ENCODE measurements at regions of chr5 and their contacts with region 1.

Region 1: GRCh38 chr5:90783460-90784333 is 225.1 kb downstream of the ADGRV1 start:
- DNase-seq: peak in 1 of 2 experiments; percentile 92
- H3K4me3 ChIP-seq: no peak overlapping the region
- H3K27ac ChIP-seq: no peak overlapping the region
- H3K4me1 ChIP-seq: no peaks in the 10 kb centered on the region
- H3K27me3 ChIP-seq: no peaks in the 10 kb centered on the region
- CTCF ChIP-seq: peak; percentile 44 to 82 (median 79)
- EP300 ChIP-seq: no peak
- POLR2A ChIP-seq: no peak
- RAD21 ChIP-seq: peak; percentile 79 to 84

Region 2: DNA sequence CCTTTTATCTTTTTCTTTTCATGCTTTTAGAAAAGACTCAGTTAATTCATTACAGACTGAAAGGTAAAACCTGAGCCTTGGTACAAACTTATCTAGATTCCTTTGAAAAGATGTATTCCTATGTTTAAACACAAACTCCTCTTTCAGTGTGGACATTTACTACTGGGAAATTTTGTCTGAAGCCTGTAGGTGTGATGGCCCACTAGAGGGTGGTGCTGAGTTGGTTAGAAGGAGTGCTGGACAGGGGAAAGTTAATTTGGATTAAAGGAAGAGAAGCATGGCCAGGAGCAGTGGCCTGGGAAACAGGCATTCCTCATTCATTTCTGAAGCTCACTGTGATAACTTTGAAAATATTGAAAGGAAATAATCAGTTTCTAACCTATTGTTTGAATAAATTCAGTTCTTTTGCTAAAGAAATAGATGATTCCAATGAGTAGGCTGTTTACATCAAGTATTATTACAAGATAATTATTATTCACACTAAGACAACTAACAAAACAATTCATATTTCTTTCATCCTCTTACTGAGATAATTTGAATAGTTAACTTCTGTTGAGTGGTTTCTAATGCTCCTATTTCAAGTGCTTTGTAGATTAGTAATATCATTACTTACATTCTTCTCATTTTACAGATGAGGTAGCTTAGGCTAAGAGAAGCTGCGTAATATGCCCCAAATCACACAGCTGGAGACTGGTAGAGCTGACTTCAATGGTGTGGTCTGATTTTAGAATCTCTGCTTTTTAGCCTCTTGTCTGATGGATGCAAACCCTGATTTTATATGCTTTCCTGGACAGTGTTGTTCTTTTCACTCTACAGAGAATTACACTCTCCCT is 74.2 kb before region 1 on chr5:
- CTCF ChIA-PET with region 1: interaction called, 24 read pairs
- POLR2A ChIA-PET with region 1: no interaction called
- DNase-seq: peak in 1 of 2 experiments; percentile 54
- H3K4me3 ChIP-seq: no peak overlapping the region
- H3K27ac ChIP-seq: no peak overlapping the region
- H3K4me1 ChIP-seq: no peaks in the 10 kb centered on the region
- H3K27me3 ChIP-seq: no peaks in the 10 kb centered on the region
- CTCF ChIP-seq: peak; percentile 18 to 82 (median 75)
- EP300 ChIP-seq: no peak
- POLR2A ChIP-seq: no peak
- RAD21 ChIP-seq: peak; percentile 58 to 61

Region 3: DNA sequence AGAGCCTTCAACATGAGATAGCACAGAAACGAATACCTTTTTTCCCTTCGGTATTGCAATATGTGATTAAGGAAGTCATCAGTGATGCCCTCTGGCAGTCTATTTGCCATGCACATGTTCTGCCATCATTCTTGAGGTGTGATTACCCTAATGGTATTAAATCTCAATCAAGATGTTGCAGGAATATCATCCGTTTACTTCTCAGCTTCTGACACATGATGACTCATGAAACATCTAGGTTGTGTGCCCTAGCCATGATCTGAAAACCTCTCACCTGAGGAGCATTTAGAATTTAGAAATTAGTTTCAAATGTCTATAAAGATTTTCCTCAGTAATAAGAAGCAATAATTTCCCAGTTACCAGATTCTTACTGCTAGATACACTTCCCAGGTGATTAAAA is 16.0 kb before region 1 on chr5:
- CTCF ChIA-PET with region 1: interaction called, 21 read pairs
- POLR2A ChIA-PET with region 1: no interaction called
- DNase-seq: no peak
- H3K4me3 ChIP-seq: no peak overlapping the region
- H3K27ac ChIP-seq: no peak overlapping the region
- H3K4me1 ChIP-seq: no peaks in the 10 kb centered on the region
- H3K27me3 ChIP-seq: no peaks in the 10 kb centered on the region
- CTCF ChIP-seq: no peak
- EP300 ChIP-seq: no peak
- POLR2A ChIP-seq: no peak
- RAD21 ChIP-seq: no peak

Region 4: DNA sequence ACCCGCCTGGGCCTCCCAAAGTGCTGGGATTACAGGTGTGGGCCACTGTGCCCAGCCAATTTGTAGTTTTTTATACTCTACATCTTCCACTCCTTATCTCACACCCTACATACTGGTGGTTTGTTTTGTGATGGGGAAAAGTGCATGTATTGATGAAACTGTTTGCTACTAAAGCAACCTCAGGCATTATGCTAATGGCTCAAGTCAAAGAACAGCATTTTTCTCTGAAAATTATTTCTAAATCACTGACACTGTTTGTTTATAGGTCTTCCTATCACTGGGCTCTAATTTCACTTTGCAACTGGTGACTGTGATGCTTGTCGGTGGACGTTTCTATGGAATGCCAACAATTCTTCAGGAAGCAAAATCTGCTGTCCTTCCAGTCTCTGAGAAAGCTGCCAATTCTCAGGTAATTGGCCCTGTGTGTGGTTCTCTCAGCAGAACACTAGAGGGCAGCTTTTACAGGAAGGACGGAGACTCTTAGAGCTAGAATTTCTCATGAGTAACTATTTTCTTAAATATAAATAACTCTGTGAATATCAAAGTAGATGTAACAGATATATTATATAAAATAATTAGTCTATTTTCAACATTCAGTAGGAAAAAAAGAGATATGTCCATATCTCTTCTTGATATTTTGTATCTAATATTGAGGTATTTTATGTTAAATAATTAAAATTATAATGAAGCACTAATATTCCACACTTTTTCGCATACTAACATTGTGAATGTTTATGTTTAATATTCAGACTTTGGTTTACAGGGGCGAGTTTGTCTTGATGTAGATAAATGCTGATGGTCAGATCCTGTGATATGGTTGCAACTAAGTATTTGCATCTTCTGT is 19.0 kb after region 1 on chr5:
- CTCF ChIA-PET with region 1: interaction called, 22 read pairs
- POLR2A ChIA-PET with region 1: no interaction called
- DNase-seq: no peak
- H3K4me3 ChIP-seq: no peak overlapping the region
- H3K27ac ChIP-seq: no peak overlapping the region
- H3K4me1 ChIP-seq: no peaks in the 10 kb centered on the region
- H3K27me3 ChIP-seq: no peaks in the 10 kb centered on the region
- CTCF ChIP-seq: peak in 2 of 3 experiments; percentile 64 to 75; a peak in 3 of 4 replicates
- EP300 ChIP-seq: no peak
- POLR2A ChIP-seq: no peak
- RAD21 ChIP-seq: peak; percentile 41 to 52

Measured in H1 (cell line).